ENCODE measurements at regions of chr4 and their contacts with region 1.

Region 1: DNA sequence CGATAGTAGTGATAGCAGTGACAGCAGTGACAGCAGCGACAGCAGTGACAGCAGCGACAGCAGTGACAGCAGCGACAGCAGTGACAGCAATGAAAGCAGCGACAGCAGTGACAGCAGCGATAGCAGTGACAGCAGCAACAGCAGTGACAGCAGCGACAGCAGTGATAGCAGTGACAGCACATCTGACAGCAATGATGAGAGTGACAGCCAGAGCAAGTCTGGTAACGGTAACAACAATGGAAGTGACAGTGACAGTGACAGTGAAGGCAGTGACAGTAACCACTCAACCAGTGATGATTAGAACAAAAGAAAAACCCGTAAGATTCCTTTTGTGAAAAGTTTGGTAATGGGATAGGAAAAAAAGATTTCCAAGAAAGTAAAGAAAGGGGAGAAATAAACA is 7.9 kb downstream of the DSPP start:
- DNase-seq: no peak
- ATAC-seq: no peak

Region 2: DNA sequence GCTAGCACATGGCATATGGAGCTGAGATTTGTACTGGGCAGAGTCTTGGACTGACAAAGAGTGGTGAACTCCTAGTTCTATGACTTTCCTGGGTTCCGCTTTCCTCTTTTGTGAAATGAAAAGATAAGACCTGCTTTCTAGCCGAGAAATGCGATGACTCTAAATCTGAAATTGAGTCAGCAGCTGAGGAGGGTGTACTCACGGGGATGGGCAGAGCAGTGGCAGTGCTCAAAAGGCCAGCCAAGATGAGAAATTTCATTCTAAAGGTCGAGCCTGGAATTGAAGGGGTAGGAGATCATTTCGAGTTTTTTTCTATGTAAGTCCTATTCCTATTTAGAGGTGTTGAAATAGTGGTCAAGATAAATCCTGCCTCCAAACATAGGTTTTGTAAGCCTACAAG is 146.9 kb before region 1 on chr4:
- intact Hi-C with region 1: no loop called
- DNase-seq: no peak
- ATAC-seq: peak; percentile 43

Region 3: DNA sequence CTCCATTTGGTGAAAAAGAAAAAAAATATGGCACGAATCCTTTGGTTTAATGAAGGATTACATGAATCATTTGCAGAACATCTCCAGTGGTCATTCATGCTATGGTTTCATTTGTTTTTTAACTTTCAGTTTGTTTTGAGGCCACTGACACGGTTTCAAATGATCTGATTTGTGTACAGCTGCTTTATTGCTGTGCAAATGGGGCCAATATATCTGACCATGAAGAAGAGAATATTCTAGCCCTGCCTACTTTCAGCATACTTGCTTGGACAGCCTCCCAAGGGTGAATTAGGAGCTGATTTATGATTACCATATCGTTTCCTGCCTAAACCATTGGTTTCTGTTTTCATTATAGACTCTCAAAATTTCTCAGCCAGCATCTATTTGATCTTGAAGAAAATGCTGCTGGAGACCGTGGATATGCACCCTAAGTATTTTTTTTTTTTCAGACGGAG is 117.8 kb before region 1 on chr4:
- intact Hi-C with region 1: no loop called
- DNase-seq: no peak
- ATAC-seq: no peak

Region 4: DNA sequence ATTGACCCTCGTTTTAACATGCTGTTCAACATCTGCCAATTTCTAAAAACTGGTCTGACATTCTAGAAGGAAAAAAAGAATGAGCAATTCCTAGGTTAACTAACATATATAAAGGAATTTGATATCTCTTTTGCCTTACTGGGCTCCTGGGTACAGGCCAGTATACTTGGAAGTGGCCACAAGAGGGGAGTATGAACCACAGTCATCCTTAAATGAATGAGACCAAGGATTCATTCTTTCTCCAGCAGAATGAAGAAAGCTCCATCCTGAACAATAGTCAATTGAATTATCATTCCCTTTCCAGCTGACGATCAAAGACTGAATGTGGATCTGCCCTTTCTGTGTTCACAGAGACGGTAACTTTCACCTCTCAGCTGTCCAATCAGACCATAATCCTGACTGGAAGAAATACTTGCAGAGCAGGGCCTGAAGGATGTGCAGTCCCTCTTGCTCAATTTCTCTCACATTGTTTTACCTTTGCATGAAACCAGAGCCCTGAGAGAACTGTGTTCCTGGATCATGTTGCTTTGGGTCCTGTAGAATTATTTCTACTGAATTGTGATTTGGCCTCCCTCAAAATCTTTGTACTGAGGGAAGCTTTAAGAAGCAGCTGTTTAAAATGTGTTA is 72.3 kb before region 1 on chr4:
- intact Hi-C with region 1: no loop called
- DNase-seq: no peak
- ATAC-seq: peak; percentile 39

Region 5: DNA sequence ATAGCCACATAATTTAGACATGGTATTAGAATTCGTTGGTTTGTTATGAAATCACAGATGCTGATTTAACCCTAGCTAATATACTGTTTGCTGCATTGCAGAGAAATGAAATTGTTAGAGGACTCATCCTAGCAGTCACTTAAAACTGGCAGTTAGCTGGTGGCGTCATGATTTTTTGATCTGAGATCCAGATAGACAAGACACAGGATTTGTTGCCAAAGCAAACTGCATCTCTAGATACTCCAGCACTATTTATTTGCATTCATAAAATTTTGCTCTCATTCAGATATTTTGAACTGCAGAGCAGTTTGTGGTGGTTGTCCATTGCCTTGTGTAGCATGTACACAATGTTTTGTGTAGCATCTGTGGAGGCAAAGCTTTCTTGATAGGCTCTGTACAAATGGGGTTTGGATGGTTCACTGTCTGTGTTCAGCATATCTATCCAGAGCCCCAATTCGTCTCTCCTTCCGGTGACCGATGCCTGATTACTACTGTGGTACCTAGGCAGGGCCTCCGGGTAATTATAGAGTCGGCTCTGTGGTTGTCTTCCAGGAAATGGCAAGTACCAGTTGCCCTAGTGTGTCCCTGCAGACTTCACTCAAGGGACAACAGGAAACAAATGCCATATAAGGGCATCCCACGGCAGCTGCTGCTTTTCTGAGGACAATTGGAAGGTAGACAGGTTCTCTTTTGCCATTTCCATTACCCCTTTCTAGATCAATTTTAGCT is 57.0 kb before region 1 on chr4:
- intact Hi-C with region 1: loop called (anchors 10 kb)
- DNase-seq: no peak
- ATAC-seq: peak; percentile 48